HEK293T (cell line): ENCODE measurements at regions of chr16 and their contacts with region 1.

Region 1: DNA sequence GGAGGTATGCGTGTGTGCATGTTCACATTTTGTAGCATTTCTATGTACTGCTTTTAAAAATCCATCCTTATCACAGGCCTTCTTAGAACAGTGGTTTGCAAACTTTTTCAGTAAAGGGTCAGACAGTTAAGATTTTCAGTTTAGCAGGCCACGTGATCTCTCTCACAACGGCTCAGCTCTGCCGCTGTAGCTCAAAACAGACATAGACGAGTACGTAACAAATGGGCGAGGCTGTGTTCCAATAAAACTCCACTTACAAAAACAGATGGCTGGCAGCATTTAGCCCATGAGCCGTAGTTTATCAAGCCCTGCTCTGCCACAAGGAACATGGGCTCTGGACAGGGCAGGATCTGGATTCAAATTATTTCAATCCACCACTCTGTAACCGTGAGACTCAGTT is 141.8 kb downstream of the XYLT1 start:
- DNase-seq: no peak

Region 2: GRCh38 chr16:17206712-17207111 is 122.2 kb before region 1 on chr16:
- CTCF ChIA-PET with region 1: interaction called, 11 read pairs
- POLR2A ChIA-PET with region 1: no interaction called
- DNase-seq: no peak

Region 3: DNA sequence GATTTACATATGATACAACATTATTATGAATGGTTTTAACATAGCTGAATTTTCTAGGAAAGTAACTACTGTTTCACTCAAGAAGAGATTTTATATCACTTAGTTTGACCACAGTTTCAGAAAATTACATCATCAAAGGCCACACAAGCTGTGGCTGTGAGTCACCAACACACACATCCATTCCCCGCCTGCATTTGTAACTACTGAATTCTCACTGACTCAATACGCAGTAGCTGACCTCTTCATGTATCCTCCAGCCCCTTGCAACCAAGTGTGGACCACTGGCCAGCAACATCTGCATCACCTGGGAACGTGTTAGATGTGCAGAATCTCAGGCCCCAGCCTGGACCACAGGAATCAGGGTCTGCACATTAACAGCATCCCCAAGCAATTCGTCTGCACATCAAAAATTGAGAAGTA is 55.8 kb before region 1 on chr16:
- CTCF ChIA-PET with region 1: no interaction called
- POLR2A ChIA-PET with region 1: no interaction called
- DNase-seq: no peak

Region 4: GRCh38 chr16:17343028-17343427 is 14.1 kb after region 1 on chr16:
- CTCF ChIA-PET with region 1: no interaction called
- POLR2A ChIA-PET with region 1: no interaction called
- DNase-seq: no peak